ENCODE measurements at regions of chr14 and their contacts with region 1.

Region 1: DNA sequence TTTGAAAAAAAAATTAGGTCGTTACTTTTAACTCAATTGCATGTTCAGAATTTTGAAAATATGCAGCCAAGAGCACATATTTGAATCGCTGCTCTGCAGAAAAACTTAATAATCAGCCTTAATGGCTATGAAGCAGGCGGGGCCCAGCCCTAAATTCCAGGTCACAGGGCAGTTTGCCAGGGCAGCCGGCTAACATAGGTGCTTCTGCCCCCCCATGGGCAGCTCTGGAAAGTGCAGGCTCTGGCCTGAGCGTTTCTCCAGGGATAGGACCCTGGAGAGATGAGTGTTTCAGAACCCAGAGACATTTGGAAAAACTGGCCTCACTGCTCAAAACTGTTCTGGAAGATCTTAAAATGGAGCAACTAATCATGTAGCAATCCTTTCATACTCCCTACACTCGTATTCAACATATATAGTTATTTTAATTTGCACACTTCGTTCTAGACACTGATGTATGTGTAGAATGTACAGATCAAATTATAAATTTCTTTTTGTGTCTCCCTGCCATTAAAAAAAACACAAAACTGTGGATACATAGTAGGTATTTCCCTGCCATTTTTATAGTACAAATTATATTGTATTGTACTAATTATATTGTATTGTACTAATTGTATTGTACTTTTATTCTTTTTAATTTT is 26.0 kb upstream of the PTGR2 start:
- DNase-seq: peak; percentile 78 to 83 (median 81)
- H3K4me3 ChIP-seq: no peak overlapping the region
- H3K4me3 Mint-ChIP-seq: no peak overlapping the region
- H3K27ac ChIP-seq: no peak overlapping the region
- H3K27ac Mint-ChIP-seq: no peak overlapping the region
- H3K4me1 ChIP-seq: peaks cover 4 to 5% of the 10 kb centered on the region in 2 donors
- H3K4me1 Mint-ChIP-seq: peaks cover 13% of the 10 kb centered on the region
- H3K27me3 ChIP-seq: no peaks in the 10 kb centered on the region
- H3K27me3 Mint-ChIP-seq: no peaks in the 10 kb centered on the region
- CTCF ChIP-seq: peak; percentile 95

Region 2: GRCh38 chr14:73728717-73729330 is 96.8 kb before region 1 on chr14:
- intact Hi-C with region 1: loop called (anchors 1 to 2 kb)
- DNase-seq: peak; percentile 91 to 94 (median 91)
- H3K4me3 ChIP-seq: no peak overlapping the region
- H3K4me3 Mint-ChIP-seq: peak overlapping the region; percentile 20 to 69
- H3K27ac ChIP-seq: peak overlapping the region; percentile 22 to 35
- H3K27ac Mint-ChIP-seq: peak overlapping the region; percentile 75 to 93 (median 88)
- H3K4me1 ChIP-seq: peaks cover 39 to 51% of the 10 kb centered on the region in 2 donors
- H3K4me1 Mint-ChIP-seq: peaks cover 44% of the 10 kb centered on the region
- H3K27me3 ChIP-seq: no peaks in the 10 kb centered on the region
- H3K27me3 Mint-ChIP-seq: peaks cover 0 to 2% (median 0%) of the 10 kb centered on the region in 3 donors
- CTCF ChIP-seq: peak; percentile 93

Region 3: DNA sequence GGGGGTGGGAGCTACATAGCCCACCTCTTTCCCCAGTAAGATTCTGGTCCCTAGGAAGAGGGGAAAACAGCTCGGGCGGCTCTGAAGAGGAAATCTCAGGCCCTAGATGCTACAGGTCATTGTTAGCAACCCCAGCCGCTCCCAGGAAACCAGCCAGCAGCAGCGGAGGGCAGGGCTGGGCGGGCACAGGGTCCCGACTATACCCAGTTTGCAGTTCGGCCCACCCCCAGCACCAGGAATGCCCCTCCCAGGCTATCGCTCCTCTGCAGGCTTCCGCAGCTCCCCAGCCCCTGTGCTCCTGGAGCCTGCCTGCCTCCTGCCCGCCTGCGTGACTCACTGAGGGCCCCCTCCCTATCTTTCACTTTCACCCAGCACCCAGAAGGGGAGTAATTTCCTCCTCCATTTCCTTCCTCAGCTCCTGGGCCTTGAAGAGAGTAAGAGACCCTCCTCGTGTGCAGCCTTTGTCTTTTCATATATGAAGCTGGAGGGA is 84.2 kb before region 1 on chr14:
- intact Hi-C with region 1: loop called in 1 of 2 experiments (anchors 5 kb)
- DNase-seq: peak; percentile 70 to 84 (median 78)
- H3K4me3 ChIP-seq: peak overlapping the region; percentile 24 to 71 (median 26)
- H3K4me3 Mint-ChIP-seq: peak overlapping the region; percentile 63 to 80
- H3K27ac ChIP-seq: peak overlapping the region; percentile 78 to 93
- H3K27ac Mint-ChIP-seq: peak overlapping the region; percentile 88 to 94 (median 92)
- H3K4me1 ChIP-seq: peaks cover 68 to 76% of the 10 kb centered on the region in 2 donors
- H3K4me1 Mint-ChIP-seq: peaks cover 72% of the 10 kb centered on the region
- H3K27me3 ChIP-seq: no peaks in the 10 kb centered on the region
- H3K27me3 Mint-ChIP-seq: peaks cover 0 to 3% (median 0%) of the 10 kb centered on the region in 3 donors
- CTCF ChIP-seq: no peak

Region 4: GRCh38 chr14:73753959-73754882 is 71.4 kb before region 1 on chr14:
- intact Hi-C with region 1: loop called in 1 of 2 experiments (anchors 5 kb)
- DNase-seq: peak; percentile 80 to 86 (median 82)
- H3K4me3 ChIP-seq: peak overlapping the region; percentile 4 to 69 (median 23)
- H3K4me3 Mint-ChIP-seq: peak overlapping the region; percentile 82 to 84
- H3K27ac ChIP-seq: peak overlapping the region; percentile 90 to 98
- H3K27ac Mint-ChIP-seq: peak overlapping the region; percentile 89 to 97 (median 95)
- H3K4me1 ChIP-seq: peaks cover 89 to 96% of the 10 kb centered on the region in 2 donors
- H3K4me1 Mint-ChIP-seq: peaks cover 92% of the 10 kb centered on the region
- H3K27me3 ChIP-seq: no peaks in the 10 kb centered on the region
- H3K27me3 Mint-ChIP-seq: peaks cover 0 to 2% (median 0%) of the 10 kb centered on the region in 3 donors
- CTCF ChIP-seq: no peak

Region 5: GRCh38 chr14:73785873-73786695 is 39.6 kb before region 1 on chr14:
- intact Hi-C with region 1: loop called in 1 of 2 experiments (anchors 5 kb)
- DNase-seq: peak; percentile 87 to 90 (median 88)
- H3K4me3 ChIP-seq: peak overlapping the region; percentile 49 to 81 (median 79)
- H3K4me3 Mint-ChIP-seq: peak overlapping the region; percentile 85 to 92
- H3K27ac ChIP-seq: peak overlapping the region; percentile 69 to 95
- H3K27ac Mint-ChIP-seq: peak overlapping the region; percentile 93 to 97 (median 95)
- H3K4me1 ChIP-seq: peaks cover 49 to 63% of the 10 kb centered on the region in 2 donors
- H3K4me1 Mint-ChIP-seq: peaks cover 68% of the 10 kb centered on the region
- H3K27me3 ChIP-seq: no peaks in the 10 kb centered on the region
- H3K27me3 Mint-ChIP-seq: peaks cover 0 to 2% (median 1%) of the 10 kb centered on the region in 3 donors
- CTCF ChIP-seq: peak; percentile 17